IMR-90 (cell line): ENCODE measurements at regions of chr7 and their contacts with region 1.

Region 1: DNA sequence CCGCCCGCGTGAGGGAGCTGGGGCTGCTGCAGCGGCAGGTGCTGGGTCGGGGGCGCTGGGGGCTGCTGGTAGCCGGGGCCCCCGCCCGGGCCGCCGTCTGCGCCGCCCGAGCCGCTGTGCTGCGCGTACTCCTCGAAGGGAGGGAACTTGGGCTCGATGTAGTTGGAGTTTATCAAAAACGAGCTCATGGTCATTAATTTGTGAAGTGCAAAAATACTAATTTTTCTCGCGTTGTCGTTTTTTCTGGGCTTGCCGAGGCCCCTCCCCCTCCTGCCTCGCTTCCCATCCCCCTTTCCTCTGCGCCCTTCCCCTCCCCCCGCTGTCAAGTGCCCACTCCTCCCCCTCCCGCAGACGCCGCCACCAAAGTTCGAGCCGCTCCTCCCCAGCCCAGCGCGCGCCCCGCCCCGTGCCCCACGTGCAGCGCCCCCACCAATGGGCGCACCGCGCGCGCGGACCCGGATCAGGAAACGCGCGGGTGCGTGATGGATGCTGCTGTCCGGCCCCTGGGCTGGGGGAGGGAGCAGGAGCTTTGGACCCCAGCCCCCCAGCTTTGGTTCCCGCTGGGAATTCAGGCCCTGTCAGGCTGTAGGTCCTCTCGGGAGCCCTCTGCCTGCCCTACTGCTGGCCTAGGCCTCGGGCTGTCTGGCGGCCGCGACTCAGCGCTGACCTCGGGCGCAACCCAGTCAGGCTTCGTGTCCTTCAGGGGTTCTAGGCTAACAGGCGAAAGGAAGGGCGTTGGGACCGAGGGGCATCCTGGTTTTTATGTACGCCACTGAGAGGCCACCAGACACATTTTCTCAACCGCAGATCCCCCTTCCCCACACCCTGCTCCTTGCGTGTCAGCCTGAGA is at the start of gene HOXA4:
- DNase-seq: peak; percentile 83
- ATAC-seq: peak; percentile 92
- H3K4me3 ChIP-seq: peak within 1 kb of the TSS; percentile 76
- H3K27ac ChIP-seq: peak within 1 kb of the TSS; percentile 77
- H3K4me1 ChIP-seq: peaks cover 24% of the 10 kb centered on the region
- H3K27me3 ChIP-seq: no peaks in the 10 kb centered on the region
- CTCF ChIP-seq: no peak
- POLR2A ChIP-seq: peak; percentile 31; the same call in 1 of the 2 replicates
- RAD21 ChIP-seq: no peak
- total RNA-seq, gene HOXA4: 0.36 and 1.1 TPM in 2 replicates

Region 2: DNA sequence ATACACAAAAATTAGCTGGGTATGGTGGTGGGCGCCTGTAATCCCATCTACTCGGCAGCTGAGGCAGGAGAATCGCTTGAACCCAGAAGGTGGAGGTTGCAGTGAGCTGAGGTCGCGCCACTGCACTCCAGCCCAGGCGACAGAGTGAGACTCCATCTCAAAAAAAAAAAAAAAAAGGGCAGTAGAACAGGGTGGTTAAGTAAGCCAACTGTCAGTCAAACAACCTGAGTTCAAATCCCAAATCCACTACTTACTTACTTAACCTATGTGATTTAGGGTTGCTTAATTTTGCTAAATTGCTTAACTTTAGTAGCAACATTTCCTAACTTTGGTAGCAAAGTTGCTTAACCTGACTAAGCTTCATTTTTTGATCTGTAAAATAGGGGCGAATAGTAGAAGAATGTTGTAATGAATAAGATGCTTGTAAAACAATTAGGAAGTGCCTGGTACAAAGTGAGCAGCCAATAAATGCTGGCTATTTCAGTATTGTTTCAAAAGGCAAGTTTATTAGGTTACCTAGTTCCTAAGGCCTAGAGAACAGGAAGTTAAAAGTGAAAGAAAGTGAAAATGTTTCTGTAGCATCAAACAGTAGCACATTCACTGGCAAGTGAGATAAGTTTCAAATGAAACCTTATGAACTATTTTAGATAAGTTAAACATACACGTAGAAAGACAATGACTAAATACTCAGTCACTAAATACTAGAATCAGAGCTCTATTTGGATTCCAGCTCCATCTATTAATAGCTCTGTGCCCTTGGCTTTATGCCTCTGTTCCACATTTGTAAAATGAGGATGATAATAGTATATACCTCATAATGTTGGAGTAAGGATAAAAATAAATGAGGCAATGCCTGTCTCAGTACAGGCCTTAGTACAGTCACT is 99.2 kb before region 1 on chr7:
- CTCF ChIA-PET with region 1: no interaction called
- POLR2A ChIA-PET with region 1: no interaction called
- dilution Hi-C with region 1: no loop called
- in situ Hi-C with region 1: no loop called
- intact Hi-C with region 1: loop called (anchors 5 kb)
- DNase-seq: peak; percentile 87
- ATAC-seq: peak; percentile 77
- H3K4me3 ChIP-seq: peak overlapping the region; percentile 18; the same call in 1 of the 2 replicates
- H3K27ac ChIP-seq: no peak overlapping the region
- H3K4me1 ChIP-seq: peaks cover 2% of the 10 kb centered on the region; the same call in 1 of the 2 replicates
- H3K27me3 ChIP-seq: peaks cover 4% of the 10 kb centered on the region; the same call in 1 of the 2 replicates
- CTCF ChIP-seq: no peak
- POLR2A ChIP-seq: no peak
- RAD21 ChIP-seq: no peak

Region 3: GRCh38 chr7:27346531-27347270 is 215.9 kb after region 1 on chr7:
- CTCF ChIA-PET with region 1: no interaction called
- POLR2A ChIA-PET with region 1: no interaction called
- dilution Hi-C with region 1: no loop called
- in situ Hi-C with region 1: no loop called
- intact Hi-C with region 1: no loop called
- DNase-seq: peak; percentile 84
- ATAC-seq: peak; percentile 93
- H3K4me3 ChIP-seq: no peak overlapping the region
- H3K27ac ChIP-seq: no peak overlapping the region
- H3K4me1 ChIP-seq: 0 out of 2 replicates have a peak, but pooled peaks cover 1% of the 10 kb centered on the region
- H3K27me3 ChIP-seq: peaks cover 17% of the 10 kb centered on the region
- CTCF ChIP-seq: no peak
- POLR2A ChIP-seq: no peak
- RAD21 ChIP-seq: no peak